Endothelial cell of umbilical vein (primary cell): ENCODE measurements at regions of chr19 and their contacts with region 1.

Region 1: GRCh38 chr19:41548954-41549688 is 26.8 kb upstream of the CEACAM21 start:
- DNase-seq: peak; percentile 89
- H3K4me3 ChIP-seq: peak overlapping the region in 2 of 3 experiments; percentile 29 to 66
- H3K27ac ChIP-seq: peak overlapping the region; percentile 92
- H3K4me1 ChIP-seq: peaks cover 38% of the 10 kb centered on the region
- H3K27me3 ChIP-seq: no peaks in the 10 kb centered on the region
- CTCF ChIP-seq: no peak
- POLR2A ChIP-seq: peak; percentile 86

Region 2: GRCh38 chr19:41479757-41480191 is 69.3 kb before region 1 on chr19:
- CTCF ChIA-PET with region 1: no interaction called
- POLR2A ChIA-PET with region 1: interaction called, 10 read pairs
- dilution Hi-C with region 1: no loop called
- intact Hi-C with region 1: no loop called
- DNase-seq: peak; percentile 98
- H3K4me3 ChIP-seq: peak overlapping the region in 2 of 3 experiments; percentile 56 to 98
- H3K27ac ChIP-seq: peak overlapping the region; percentile 97
- H3K4me1 ChIP-seq: peaks cover 37% of the 10 kb centered on the region
- H3K27me3 ChIP-seq: peaks cover under 1 to 3% of the 10 kb centered on the region in 2 experiments
- CTCF ChIP-seq: no peak
- POLR2A ChIP-seq: peak; percentile 96

Region 3: GRCh38 chr19:41597600-41598041 is 48.5 kb after region 1 on chr19:
- CTCF ChIA-PET with region 1: interaction called, 4 read pairs
- POLR2A ChIA-PET with region 1: no interaction called
- dilution Hi-C with region 1: no loop called
- intact Hi-C with region 1: loop called (anchors 2 kb)
- DNase-seq: peak; percentile 70
- H3K4me3 ChIP-seq: no peak overlapping the region
- H3K27ac ChIP-seq: no peak overlapping the region
- H3K4me1 ChIP-seq: peaks cover 5% of the 10 kb centered on the region
- H3K27me3 ChIP-seq: peaks cover 8 to 18% of the 10 kb centered on the region in 2 experiments
- CTCF ChIP-seq: peak; percentile 85 to 89
- POLR2A ChIP-seq: no peak